ENCODE measurements at regions of chr9 and their contacts with region 1.

Region 1: GRCh38 chr9:105371691-105372090 is 76.1 kb upstream of the FSD1L start:
- DNase-seq: no peak
- H3K4me3 ChIP-seq: no peak overlapping the region
- H3K27ac ChIP-seq: no peak overlapping the region
- H3K4me1 ChIP-seq: no peaks in the 10 kb centered on the region
- H3K27me3 ChIP-seq: no peaks in the 10 kb centered on the region
- CTCF ChIP-seq: no peak
- EP300 ChIP-seq: no peak
- POLR2A ChIP-seq: no peak
- RAD21 ChIP-seq: no peak

Region 2: GRCh38 chr9:105309531-105309931 is 62.2 kb before region 1 on chr9:
- CTCF ChIA-PET with region 1: no interaction called
- POLR2A ChIA-PET with region 1: no interaction called
- DNase-seq: no peak
- H3K4me3 ChIP-seq: no peak overlapping the region
- H3K27ac ChIP-seq: no peak overlapping the region
- H3K4me1 ChIP-seq: peaks cover 2 to 6% (median 3%) of the 10 kb centered on the region in 4 experiments; a peak in 3 of 7 replicates
- H3K27me3 ChIP-seq: no peaks in the 10 kb centered on the region
- CTCF ChIP-seq: no peak
- EP300 ChIP-seq: no peak
- POLR2A ChIP-seq: no peak
- RAD21 ChIP-seq: no peak

Region 3: GRCh38 chr9:105414947-105415661 is 43.4 kb after region 1 on chr9:
- CTCF ChIA-PET with region 1: interaction called, 29 read pairs
- POLR2A ChIA-PET with region 1: no interaction called
- DNase-seq: peak in 1 of 2 experiments; percentile 83
- H3K4me3 ChIP-seq: peak overlapping the region in 2 of 4 experiments; percentile 20 to 45; a peak in 2 of 8 replicates
- H3K27ac ChIP-seq: no peak overlapping the region
- H3K4me1 ChIP-seq: peaks cover 0 to 14% (median 6%) of the 10 kb centered on the region in 4 experiments; a peak in 6 of 7 replicates
- H3K27me3 ChIP-seq: no peaks in the 10 kb centered on the region
- CTCF ChIP-seq: peak; percentile 51 to 89 (median 81)
- EP300 ChIP-seq: 0 out of 3 replicates have a peak, but pooled peaks of 1 of the 2 experiments have one; percentile 28
- POLR2A ChIP-seq: no peak
- RAD21 ChIP-seq: peak; percentile 99

Measured in H1 (cell line).